Activated T-helper 2 cell treated with anti-CD3 and anti-CD28 coated beads, Interferon-gamma antibody, Interleukin-2, Interleukin-4, amounts not matched to agents 10 μg/mL and 5 μg/mL and 100 μg/mL, durations not matched to agents 14 hours and 24 hours and 36 hours (primary cell): ENCODE measurements at regions of chr19 and their contacts with region 1.

Region 1: DNA sequence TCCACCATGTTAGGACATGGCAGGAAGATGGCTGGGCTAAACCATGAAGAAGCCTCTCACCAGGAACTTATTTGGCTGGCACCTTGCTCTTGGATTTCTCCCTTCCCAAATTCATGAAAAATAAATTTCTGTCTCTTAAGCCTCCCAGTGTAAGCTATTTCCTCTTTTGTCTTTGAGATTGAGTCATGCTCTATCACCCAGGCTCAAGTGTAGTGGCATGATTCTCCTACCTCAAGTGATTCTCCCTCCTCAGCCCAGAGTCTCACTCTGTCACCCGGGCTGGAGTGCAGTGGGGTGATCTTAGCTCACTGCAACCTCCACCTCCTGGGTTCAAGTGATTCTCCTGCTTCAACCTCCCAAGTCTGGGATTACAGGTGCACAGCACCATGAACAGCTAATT is 12.6 kb downstream of the ZNF888 start:
- DNase-seq: no peak
- H3K4me3 Mint-ChIP-seq: no peak overlapping the region
- H3K27ac Mint-ChIP-seq: no peak overlapping the region
- H3K4me1 Mint-ChIP-seq: no peaks in the 10 kb centered on the region
- H3K27me3 Mint-ChIP-seq: no peaks in the 10 kb centered on the region

Region 2: DNA sequence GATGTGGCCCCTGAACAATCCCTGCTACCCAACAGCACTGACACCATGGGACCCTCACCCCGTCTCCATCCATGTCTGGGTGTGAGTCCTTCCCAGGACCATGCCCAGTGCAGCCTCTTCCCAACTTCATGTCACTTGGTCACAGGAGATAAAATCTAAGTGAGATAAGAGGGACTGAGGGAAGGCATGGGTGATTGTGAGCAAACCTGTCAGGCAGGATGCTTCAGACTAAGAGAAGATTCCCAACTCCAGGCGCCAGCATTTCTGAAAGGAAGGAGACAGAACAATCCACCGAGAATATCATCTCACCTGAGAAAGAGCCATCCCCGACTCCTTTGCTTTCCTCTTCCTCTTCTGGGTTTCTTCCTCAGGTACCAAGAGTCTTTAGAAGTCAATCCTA is 20.7 kb before region 1 on chr19:
- intact Hi-C with region 1: loop called (anchors 2 kb)
- DNase-seq: no peak
- H3K4me3 Mint-ChIP-seq: no peak overlapping the region
- H3K27ac Mint-ChIP-seq: no peak overlapping the region
- H3K4me1 Mint-ChIP-seq: no peaks in the 10 kb centered on the region
- H3K27me3 Mint-ChIP-seq: no peaks in the 10 kb centered on the region